SK-N-SH (cell line): ENCODE measurements at regions of chr17 and their contacts with region 1.

Region 1: GRCh38 chr17:45235416-45236281 is 14.0 kb downstream of the FMNL1 start:
- DNase-seq: peak; percentile 81
- H3K4me3 ChIP-seq: no peak overlapping the region
- H3K27ac ChIP-seq: no peak overlapping the region
- H3K4me1 ChIP-seq: peaks cover 4 to 16% of the 10 kb centered on the region in 2 experiments; a peak in 2 of 4 replicates
- H3K27me3 ChIP-seq: no peaks in the 10 kb centered on the region
- CTCF ChIP-seq: peak; percentile 83
- EP300 ChIP-seq: no peak
- RAD21 ChIP-seq: peak; percentile 65

Region 2: GRCh38 chr17:45016823-45017222 is 218.8 kb before region 1 on chr17:
- CTCF ChIA-PET with region 1: no interaction called
- POLR2A ChIA-PET with region 1: no interaction called
- DNase-seq: no peak
- H3K4me3 ChIP-seq: no peak overlapping the region
- H3K27ac ChIP-seq: no peak overlapping the region
- H3K4me1 ChIP-seq: peaks cover 10 to 21% of the 10 kb centered on the region in 2 experiments; a peak in 1 of 4 replicates
- H3K27me3 ChIP-seq: no peaks in the 10 kb centered on the region
- CTCF ChIP-seq: peak; percentile 35; the same call in 1 of the 2 replicates
- EP300 ChIP-seq: no peak
- RAD21 ChIP-seq: peak; percentile 29; the same call in 1 of the 2 replicates

Region 3: DNA sequence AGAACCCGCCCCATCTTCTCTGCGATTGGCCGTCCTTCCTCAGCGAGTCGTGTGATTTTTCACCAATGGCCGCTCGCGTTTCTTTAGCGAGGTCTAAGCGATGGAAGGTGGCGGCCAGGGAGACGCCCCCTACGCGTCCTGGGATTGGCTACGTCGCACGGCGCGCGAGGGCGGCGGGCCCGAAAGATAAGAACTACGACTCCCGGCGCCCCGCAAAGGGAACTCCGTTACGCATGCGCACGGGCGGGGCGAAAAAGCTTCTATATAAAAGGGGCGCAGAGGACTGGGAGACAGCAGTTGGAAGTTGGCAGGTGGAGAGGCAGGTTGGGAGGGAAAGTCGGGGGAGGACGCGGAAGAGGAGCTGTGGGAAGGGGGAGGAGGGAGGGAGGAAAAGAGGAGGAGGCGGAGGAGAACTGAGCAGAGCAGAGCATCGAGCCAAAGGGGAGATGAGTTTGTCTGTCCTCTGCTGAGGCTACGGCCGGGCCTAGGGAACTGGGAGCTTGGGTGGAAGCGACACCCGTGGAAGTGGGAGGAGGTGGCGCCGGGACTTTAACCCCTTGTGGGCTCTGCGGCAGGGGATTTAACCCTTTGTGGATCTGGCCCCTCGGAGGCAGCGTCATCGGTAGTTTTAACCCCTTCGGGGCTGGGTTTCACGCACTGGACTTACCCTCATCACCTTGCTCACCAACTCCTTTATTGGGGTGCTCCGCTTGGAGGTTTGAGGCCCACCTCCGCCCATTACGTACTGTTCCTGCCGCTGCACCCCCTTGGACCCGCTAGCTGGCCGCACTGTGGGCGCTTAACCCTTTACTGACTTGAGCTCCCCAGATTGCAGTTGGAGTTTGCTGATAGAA is 87.2 kb before region 1 on chr17 and contains the start of gene HEXIM1:
- CTCF ChIA-PET with region 1: interaction called, 10 read pairs
- POLR2A ChIA-PET with region 1: interaction called, 4 read pairs
- DNase-seq: peak; percentile 94
- H3K4me3 ChIP-seq: peak within 1 kb of the TSS; percentile 85 to 99
- H3K27ac ChIP-seq: peak within 1 kb of the TSS; percentile 99 to 100
- H3K4me1 ChIP-seq: peaks cover 17 to 25% of the 10 kb centered on the region in 2 experiments; a peak in 3 of 4 replicates
- H3K27me3 ChIP-seq: no peaks in the 10 kb centered on the region
- CTCF ChIP-seq: no peak
- EP300 ChIP-seq: no peak; a peak in 1 of 4 replicates
- RAD21 ChIP-seq: no peak
- polyA plus RNA-seq, gene HEXIM1: 16.1 and 20.7 TPM in 2 replicates

Region 4: GRCh38 chr17:45284176-45285140 is 48.8 kb after region 1 on chr17:
- CTCF ChIA-PET with region 1: interaction called, 11 read pairs
- POLR2A ChIA-PET with region 1: no interaction called
- DNase-seq: no peak
- H3K4me3 ChIP-seq: no peak overlapping the region
- H3K27ac ChIP-seq: no peak overlapping the region; a peak in 1 of 4 replicates
- H3K4me1 ChIP-seq: peaks cover 0 to 36% of the 10 kb centered on the region in 2 experiments; a peak in 2 of 4 replicates
- H3K27me3 ChIP-seq: no peaks in the 10 kb centered on the region
- CTCF ChIP-seq: peak; percentile 42
- EP300 ChIP-seq: no peak
- RAD21 ChIP-seq: peak; percentile 24; the same call in 1 of the 2 replicates

Region 5: DNA sequence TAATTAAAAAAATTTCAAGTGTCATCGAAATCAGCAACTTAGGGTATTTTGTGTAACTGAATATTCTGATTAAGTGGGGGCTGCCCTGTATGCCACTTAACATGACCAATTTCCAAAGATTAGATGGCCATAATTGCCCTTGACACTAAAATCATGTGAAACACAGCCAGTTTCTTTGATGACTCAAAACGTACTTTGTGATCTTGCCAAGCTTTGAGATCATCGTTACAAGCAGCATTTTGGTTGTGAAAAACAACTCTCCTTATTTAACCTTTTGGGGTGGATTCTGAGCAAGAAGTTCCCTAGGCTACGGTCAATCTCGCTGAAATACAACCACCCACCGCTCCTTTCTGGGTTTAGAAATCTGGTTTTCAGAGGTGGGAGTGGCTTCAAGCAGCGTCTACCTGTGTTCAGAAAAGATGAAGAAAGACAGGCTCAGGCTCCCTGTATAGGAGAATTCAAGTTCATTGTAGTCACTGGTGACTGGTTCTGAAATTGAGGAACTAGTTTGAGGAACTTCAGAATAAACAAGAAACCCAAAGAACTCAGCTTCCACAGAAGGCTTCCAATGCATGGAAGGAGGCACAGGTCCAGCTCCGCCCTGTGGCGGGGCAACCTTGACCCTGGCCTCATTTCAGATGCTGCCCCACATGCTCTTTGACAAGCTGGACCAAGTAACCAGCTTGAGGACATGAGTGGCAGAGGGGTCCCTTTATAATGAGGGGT is 71.8 kb after region 1 on chr17:
- CTCF ChIA-PET with region 1: interaction called, 32 read pairs
- POLR2A ChIA-PET with region 1: no interaction called
- DNase-seq: no peak
- H3K4me3 ChIP-seq: no peak overlapping the region
- H3K27ac ChIP-seq: peak overlapping the region; percentile 48 to 98; a peak in 3 of 4 replicates
- H3K4me1 ChIP-seq: peaks cover 27 to 48% of the 10 kb centered on the region in 2 experiments
- H3K27me3 ChIP-seq: no peaks in the 10 kb centered on the region
- CTCF ChIP-seq: no peak
- EP300 ChIP-seq: peak in 1 of 2 experiments; percentile 68; a peak in 2 of 4 replicates
- RAD21 ChIP-seq: no peak

Region 6: GRCh38 chr17:45317112-45317928 is 81.7 kb after region 1 on chr17:
- CTCF ChIA-PET with region 1: interaction called, 32 read pairs
- POLR2A ChIA-PET with region 1: interaction called, 3 read pairs
- DNase-seq: peak; percentile 99
- H3K4me3 ChIP-seq: peak overlapping the region; percentile 87 to 93
- H3K27ac ChIP-seq: peak overlapping the region; percentile 95 to 99
- H3K4me1 ChIP-seq: peaks cover 47 to 58% of the 10 kb centered on the region in 2 experiments
- H3K27me3 ChIP-seq: no peaks in the 10 kb centered on the region
- CTCF ChIP-seq: no peak
- EP300 ChIP-seq: no peak
- RAD21 ChIP-seq: 0 out of 2 replicates have a peak, but pooled peaks have one; percentile 15

Region 7: GRCh38 chr17:45371414-45372327 is 136.0 kb after region 1 on chr17:
- CTCF ChIA-PET with region 1: interaction called, 13 read pairs
- POLR2A ChIA-PET with region 1: interaction called, 3 read pairs
- DNase-seq: peak; percentile 78
- H3K4me3 ChIP-seq: peak overlapping the region; percentile 1 to 43; a peak in 1 of 4 replicates
- H3K27ac ChIP-seq: peak overlapping the region; percentile 78 to 96
- H3K4me1 ChIP-seq: peaks cover 2 to 31% of the 10 kb centered on the region in 2 experiments; a peak in 3 of 4 replicates
- H3K27me3 ChIP-seq: no peaks in the 10 kb centered on the region
- CTCF ChIP-seq: no peak; the same call in none of the 2 replicates
- EP300 ChIP-seq: peak in 1 of 2 experiments; percentile 94; a peak in 3 of 4 replicates
- RAD21 ChIP-seq: no peak

Region 8: GRCh38 chr17:45394913-45395568 is 159.4 kb after region 1 on chr17:
- CTCF ChIA-PET with region 1: interaction called, 132 read pairs
- POLR2A ChIA-PET with region 1: no interaction called
- DNase-seq: peak; percentile 95
- H3K4me3 ChIP-seq: no peak overlapping the region; a peak in 1 of 4 replicates
- H3K27ac ChIP-seq: no peak overlapping the region
- H3K4me1 ChIP-seq: peaks cover 0 to 8% of the 10 kb centered on the region in 2 experiments; a peak in 1 of 4 replicates
- H3K27me3 ChIP-seq: no peaks in the 10 kb centered on the region
- CTCF ChIP-seq: peak; percentile 76
- EP300 ChIP-seq: no peak
- RAD21 ChIP-seq: peak; percentile 83